GM13976 (cell line): ENCODE measurements at regions of chr2 and their contacts with region 1.

Region 1: GRCh38 chr2:65040400-65041261 is 15.6 kb upstream of the CEP68 start:
- DNase-seq: peak; percentile 75
- CTCF ChIP-seq: peak; percentile 90

Region 2: DNA sequence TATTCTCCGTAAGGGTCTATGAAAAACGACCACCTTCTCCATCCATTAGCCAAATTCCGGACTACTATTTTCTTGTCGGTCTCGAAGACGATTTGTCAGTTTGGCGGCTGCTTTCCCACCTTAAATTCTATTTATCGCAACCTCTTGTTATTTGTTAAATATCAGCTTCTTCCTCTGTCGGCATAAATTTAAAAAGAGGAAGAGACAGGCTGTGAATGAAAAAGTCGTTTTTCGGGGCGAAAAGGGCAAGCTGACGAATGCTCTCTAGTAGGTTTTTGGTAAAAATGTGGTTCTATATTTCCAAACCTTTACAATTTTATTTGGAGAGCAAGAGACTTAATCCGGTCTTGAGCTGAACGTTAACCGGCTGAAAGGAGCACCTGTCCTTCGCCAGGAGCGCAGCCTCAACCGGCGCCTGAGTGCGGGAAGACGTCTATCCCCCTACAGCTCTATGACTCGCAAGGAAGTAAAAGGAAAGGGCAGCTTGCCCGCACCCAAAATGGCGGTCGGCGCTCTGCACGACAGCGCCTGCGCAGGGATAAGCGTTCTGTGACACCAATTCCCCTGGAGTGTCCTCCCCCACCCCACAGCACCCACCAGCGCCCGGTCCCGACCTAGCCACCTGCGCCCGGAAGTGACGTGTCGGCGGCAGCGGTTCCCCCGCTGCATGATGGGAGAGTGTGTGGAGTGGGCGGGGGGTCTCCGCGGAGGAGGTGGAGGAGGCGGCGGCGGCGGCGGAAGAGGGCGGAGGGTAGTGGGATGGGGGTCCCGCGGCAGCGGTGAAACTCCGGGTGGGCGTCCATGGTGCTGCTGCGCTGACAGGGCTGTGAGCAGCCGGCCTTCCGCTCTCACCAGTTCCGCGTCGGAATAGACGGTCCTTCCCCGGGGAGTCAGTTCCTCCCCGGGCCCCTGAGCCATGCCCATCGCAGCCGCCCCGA is 516.7 kb before region 1 on chr2 and contains the start of gene AFTPH:
- in situ Hi-C with region 1: loop called (anchors 25 kb)
- DNase-seq: peak; percentile 98
- CTCF ChIP-seq: no peak

Region 3: DNA sequence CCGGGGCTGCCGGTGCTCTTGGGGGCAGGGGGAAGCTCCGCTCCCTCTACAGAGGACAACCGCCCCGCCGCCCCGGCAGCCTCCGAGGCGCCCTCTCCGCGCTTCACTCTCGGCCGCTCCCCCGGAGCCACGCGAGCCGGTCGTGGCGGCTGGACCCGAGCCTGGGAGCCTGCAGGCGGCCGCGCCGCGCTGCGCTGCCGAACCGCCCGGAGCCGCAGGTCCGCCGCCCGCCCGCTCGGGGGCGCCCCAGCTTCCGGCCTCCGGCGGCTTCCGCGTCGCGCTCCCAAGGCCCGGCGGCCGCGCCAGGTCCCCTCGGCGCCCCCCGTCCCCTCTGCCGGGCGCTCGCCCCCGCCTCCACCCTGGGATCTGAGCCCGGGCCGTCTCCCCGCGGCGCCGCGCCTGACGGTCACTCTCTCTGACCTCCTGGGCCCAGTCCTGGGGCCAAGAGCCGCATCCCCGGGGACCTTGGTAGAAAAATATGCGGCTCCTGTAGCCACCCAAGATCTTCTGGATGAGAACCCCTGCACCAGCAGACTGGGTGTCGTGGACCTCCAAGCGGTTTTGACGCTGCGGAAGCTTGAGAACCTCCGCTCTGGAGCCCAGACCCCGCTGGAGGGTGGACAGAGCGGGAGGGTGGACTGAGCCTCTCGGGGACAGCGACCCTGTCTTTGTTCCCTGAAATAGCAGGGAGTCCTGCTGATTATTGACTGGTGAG is 431.2 kb before region 1 on chr2:
- in situ Hi-C with region 1: loop called (anchors 25 kb)
- DNase-seq: peak; percentile 93
- CTCF ChIP-seq: peak; percentile 88